Ascending aorta (tissue), 2 donors: ENCODE measurements at regions of chr12 and their contacts with region 1.

Region 1: DNA sequence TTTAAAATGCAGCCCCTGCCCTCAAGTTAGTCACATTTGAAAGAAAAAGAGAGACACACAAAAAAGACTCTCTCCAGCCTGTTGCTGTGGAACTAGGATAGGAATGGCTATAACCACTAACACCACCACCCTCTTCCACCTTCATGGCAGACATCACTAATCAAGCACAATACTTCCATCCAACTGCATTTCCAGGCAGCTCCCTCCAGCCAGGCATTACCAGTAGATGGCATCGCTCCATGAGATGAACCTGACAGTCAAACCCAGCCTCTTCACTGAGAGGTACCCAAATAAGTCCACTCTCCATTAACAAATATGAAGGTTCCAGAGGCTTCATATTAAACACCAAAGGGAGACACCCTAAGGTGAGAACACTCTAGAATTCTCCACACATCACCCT is 24.4 kb downstream of the SLC8B1 start:
- DNase-seq: no peak
- H3K4me3 ChIP-seq: no peak overlapping the region
- H3K27ac ChIP-seq: no peak overlapping the region
- H3K4me1 ChIP-seq: no peaks in the 10 kb centered on the region
- H3K27me3 ChIP-seq: no peaks in the 10 kb centered on the region
- CTCF ChIP-seq: no peak

Region 2: GRCh38 chr12:113252456-113252855 is 58.0 kb before region 1 on chr12:
- intact Hi-C with region 1: no loop called
- DNase-seq: no peak
- H3K4me3 ChIP-seq: no peak overlapping the region
- H3K27ac ChIP-seq: no peak overlapping the region
- H3K4me1 ChIP-seq: peaks cover 2 to 11% of the 10 kb centered on the region in 2 donors
- H3K27me3 ChIP-seq: no peaks in the 10 kb centered on the region
- CTCF ChIP-seq: no peak

Region 3: DNA sequence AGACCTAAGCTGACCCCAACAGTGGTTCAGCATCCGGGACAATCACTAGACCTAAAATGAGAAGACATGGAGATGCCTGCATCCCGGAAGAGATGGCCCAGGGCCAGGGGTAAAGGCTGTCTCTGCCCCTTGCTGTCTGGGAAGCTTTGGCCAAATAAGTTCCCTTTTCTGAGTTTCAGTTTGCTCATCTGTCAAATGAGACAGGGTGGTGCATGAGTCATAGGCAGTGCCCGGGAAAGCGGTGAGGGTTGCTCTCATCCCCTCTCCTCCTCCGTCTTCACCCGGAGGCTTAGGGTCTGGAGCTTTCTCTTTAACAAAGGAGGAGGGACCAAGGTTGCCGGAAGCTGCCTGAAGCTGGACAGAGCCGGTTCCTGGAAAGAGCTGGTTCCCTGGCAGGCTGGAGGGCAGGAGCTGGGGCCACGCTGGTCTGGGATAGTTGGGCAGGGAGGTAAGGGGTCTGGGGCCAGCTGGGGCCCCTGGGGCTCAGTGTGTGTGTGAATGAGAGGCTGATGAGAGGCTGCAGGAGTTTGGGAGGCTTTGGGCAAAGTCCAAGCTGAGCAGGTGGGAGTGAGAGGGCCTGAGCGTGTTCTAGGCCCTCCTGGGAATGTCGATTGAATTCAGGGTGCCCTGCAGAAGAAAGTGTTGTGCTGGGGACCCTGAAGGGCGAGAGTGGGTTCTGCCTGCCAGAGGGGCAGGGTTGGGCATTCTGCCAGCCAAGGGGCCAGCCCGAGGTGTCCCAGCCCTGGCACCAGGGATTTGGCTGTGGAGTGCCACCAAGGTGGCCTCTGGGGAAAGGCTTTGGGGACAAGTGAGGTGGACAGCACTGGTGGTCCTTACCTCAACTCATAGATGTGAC is 111.8 kb after region 1 on chr12 and contains the start of gene SDSL:
- intact Hi-C with region 1: loop called (anchors 5 kb)
- DNase-seq: peak; percentile 57 to 84
- H3K4me3 ChIP-seq: peak within 1 kb of the TSS; percentile 52 to 68
- H3K27ac ChIP-seq: peak within 1 kb of the TSS in 1 of 2 donors; percentile 68
- H3K4me1 ChIP-seq: peaks cover 0 to 6% of the 10 kb centered on the region in 2 donors
- H3K27me3 ChIP-seq: no peaks in the 10 kb centered on the region
- CTCF ChIP-seq: no peak
- total RNA-seq, gene SDSL: 11.0 TPM